Activated B cell treated with CpG ODN at 0.5 μM for 24 hours (primary cell): ENCODE measurements at regions of chr18 and their contacts with region 1.

Region 1: GRCh38 chr18:50356036-50356945 is 18.6 kb upstream of the SKA1 start:
- DNase-seq: no peak
- ATAC-seq: peak; percentile 75
- H3K4me3 Mint-ChIP-seq: peak overlapping the region; percentile 50
- H3K27ac Mint-ChIP-seq: peak overlapping the region; percentile 30
- H3K4me1 Mint-ChIP-seq: peaks cover 19% of the 10 kb centered on the region
- H3K27me3 Mint-ChIP-seq: peaks cover 6% of the 10 kb centered on the region
- CTCF ChIP-seq: no peak

Region 2: DNA sequence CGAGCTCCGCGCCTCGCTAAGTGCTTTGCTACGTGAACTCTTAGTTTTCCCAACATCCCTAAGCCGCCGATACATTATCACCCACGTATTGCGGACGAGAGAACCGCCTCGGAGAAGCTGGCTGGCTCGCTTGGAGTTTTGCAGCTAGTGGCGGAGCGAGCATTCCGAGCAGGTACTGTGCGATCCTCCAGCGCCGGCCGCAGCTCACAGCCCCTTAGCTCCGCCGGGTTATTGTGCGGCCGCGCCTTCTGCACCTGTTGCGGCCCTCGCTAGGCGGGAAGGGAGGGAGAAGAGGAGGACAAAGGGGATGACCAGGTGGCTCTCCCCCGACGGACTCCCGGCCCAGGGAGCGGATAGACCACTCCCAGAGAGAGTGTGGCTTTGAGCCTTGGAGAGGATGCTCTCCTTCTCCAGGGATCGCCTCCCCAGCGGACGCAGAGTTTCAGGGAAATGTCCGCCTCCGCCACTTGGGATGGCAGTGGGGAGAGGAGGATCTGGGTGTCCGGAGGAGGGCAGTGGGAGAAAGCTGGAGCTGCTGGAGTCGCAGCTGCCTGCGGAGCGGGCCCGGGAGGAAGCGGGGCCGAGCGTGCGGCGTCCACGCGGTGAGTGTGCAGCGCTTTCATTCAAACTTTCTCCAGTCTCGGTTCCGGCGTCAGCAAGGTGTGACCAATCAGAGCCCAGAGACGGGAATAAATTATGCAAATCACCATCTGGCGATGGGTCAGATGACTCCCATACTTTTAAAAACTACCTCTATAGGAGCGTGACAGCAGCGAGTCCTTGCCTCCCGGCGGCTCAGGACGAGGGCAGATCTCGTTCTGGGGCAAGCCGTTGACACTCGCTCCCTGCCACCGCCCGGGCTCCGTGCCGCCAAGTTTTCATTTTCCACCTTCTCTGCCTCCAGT is 794.8 kb before region 1 on chr18 and contains the start of gene LIPG:
- CTCF ChIA-PET with region 1: no interaction called
- POLR2A ChIA-PET with region 1: no interaction called
- intact Hi-C with region 1: loop called (anchors 5 kb)
- DNase-seq: peak; percentile 15
- ATAC-seq: peak; percentile 61
- H3K4me3 Mint-ChIP-seq: peak within 1 kb of the TSS; percentile 73
- H3K27ac Mint-ChIP-seq: no peak within 1 kb of the TSS
- H3K4me1 Mint-ChIP-seq: peaks cover 32% of the 10 kb centered on the region
- H3K27me3 Mint-ChIP-seq: peaks cover 73% of the 10 kb centered on the region
- CTCF ChIP-seq: no peak
- total RNA-seq, gene LIPG: 0.29 TPM in 1 of 2 replicates, not detected in the other

Region 3: GRCh38 chr18:50218432-50219197 is 137.7 kb before region 1 on chr18:
- CTCF ChIA-PET with region 1: interaction called, 149 read pairs
- POLR2A ChIA-PET with region 1: interaction called, 7 read pairs
- intact Hi-C with region 1: loop called (anchors 1 kb)
- DNase-seq: peak; percentile 16
- ATAC-seq: peak; percentile 60
- H3K4me3 Mint-ChIP-seq: no peak overlapping the region
- H3K27ac Mint-ChIP-seq: no peak overlapping the region
- H3K4me1 Mint-ChIP-seq: peaks cover 4% of the 10 kb centered on the region
- H3K27me3 Mint-ChIP-seq: peaks cover 25% of the 10 kb centered on the region
- CTCF ChIP-seq: no peak

Region 4: GRCh38 chr18:50287441-50288347 is 68.6 kb before region 1 on chr18 and contains the start of gene CXXC1:
- CTCF ChIA-PET with region 1: interaction called, 5 read pairs
- POLR2A ChIA-PET with region 1: interaction called, 20 read pairs
- intact Hi-C with region 1: loop called (anchors 1 kb)
- DNase-seq: peak; percentile 88
- ATAC-seq: peak; percentile 87
- H3K4me3 Mint-ChIP-seq: peak within 1 kb of the TSS; percentile 99
- H3K27ac Mint-ChIP-seq: peak within 1 kb of the TSS; percentile 95
- H3K4me1 Mint-ChIP-seq: peaks cover 23% of the 10 kb centered on the region
- H3K27me3 Mint-ChIP-seq: no peaks in the 10 kb centered on the region
- CTCF ChIP-seq: no peak
- total RNA-seq, gene CXXC1: 126 and 134 TPM in 2 replicates

Region 5: GRCh38 chr18:50315100-50315871 is 41.0 kb before region 1 on chr18:
- CTCF ChIA-PET with region 1: interaction called, 19 read pairs
- POLR2A ChIA-PET with region 1: no interaction called
- intact Hi-C with region 1: loop called (anchors 1 kb)
- DNase-seq: no peak
- ATAC-seq: peak; percentile 78
- H3K4me3 Mint-ChIP-seq: peak overlapping the region; percentile 42
- H3K27ac Mint-ChIP-seq: peak overlapping the region; percentile 19
- H3K4me1 Mint-ChIP-seq: peaks cover 69% of the 10 kb centered on the region
- H3K27me3 Mint-ChIP-seq: no peaks in the 10 kb centered on the region
- CTCF ChIP-seq: no peak

Region 6: DNA sequence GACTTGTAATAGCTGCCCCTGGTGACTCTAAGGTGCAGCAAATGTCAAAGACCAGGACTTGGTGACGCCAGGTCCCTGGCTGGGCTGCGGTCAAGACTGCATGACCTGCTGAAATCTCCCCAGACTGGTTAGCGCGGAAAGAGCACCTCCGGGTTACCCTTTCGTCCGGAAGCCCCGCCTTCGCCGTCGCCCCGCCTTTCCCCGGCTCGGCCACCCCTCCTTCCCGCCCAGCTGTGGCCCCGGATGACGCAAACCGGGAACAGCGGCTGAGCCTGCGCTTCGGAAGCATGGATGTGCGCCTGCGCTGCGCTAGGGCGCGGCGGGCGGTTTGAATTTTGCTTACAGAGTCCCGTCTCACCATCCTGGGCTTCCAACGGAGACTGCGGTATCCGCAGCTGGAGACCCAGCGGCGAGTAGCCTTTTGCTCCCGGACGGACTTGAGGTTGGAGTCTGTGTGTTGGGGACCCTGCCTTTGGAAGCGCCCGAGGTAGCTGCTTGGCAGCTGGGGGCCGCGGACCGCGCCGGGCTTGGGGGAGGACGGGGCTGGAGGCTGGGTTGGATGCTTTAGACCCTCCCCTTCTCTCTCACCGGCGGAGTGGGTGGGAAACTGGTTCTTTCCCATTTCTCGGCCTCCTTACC is 18.6 kb after region 1 on chr18 and contains the start of gene SKA1:
- CTCF ChIA-PET with region 1: interaction called, 6 read pairs
- POLR2A ChIA-PET with region 1: interaction called, 3 read pairs
- intact Hi-C with region 1: loop called (anchors 1 kb)
- DNase-seq: peak; percentile 85
- ATAC-seq: peak; percentile 100
- H3K4me3 Mint-ChIP-seq: peak within 1 kb of the TSS; percentile 83
- H3K27ac Mint-ChIP-seq: peak within 1 kb of the TSS; percentile 84
- H3K4me1 Mint-ChIP-seq: peaks cover 14% of the 10 kb centered on the region
- H3K27me3 Mint-ChIP-seq: peaks cover 6% of the 10 kb centered on the region
- CTCF ChIP-seq: no peak
- total RNA-seq, gene SKA1: 0.71 and 1.0 TPM in 2 replicates

Region 7: DNA sequence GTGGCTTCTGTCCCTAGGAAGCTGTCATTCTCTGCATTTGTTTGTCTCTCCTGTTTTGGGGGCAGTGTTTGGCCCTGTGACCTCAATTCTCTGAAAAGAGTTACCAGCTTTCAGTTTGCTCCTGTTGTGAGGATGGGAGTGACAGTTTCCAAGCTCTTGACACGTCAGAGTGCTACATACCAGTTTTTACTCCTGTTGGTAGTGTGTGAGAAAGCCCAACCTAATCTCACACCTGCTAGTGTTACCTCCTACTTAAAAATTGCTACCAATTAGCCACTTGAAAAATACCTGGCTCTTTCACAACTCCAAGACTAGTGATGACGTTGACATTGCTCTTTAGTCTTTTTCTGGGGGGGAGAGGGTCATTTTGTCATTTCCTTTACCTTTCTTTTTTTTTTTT is 32.7 kb after region 1 on chr18:
- CTCF ChIA-PET with region 1: no interaction called
- POLR2A ChIA-PET with region 1: no interaction called
- intact Hi-C with region 1: no loop called
- DNase-seq: no peak
- ATAC-seq: no peak
- H3K4me3 Mint-ChIP-seq: no peak overlapping the region
- H3K27ac Mint-ChIP-seq: no peak overlapping the region
- H3K4me1 Mint-ChIP-seq: no peaks in the 10 kb centered on the region
- H3K27me3 Mint-ChIP-seq: no peaks in the 10 kb centered on the region
- CTCF ChIP-seq: no peak

Region 8: GRCh38 chr18:50465201-50466153 is 109.2 kb after region 1 on chr18:
- CTCF ChIA-PET with region 1: no interaction called
- POLR2A ChIA-PET with region 1: no interaction called
- intact Hi-C with region 1: no loop called
- DNase-seq: no peak
- ATAC-seq: no peak
- H3K4me3 Mint-ChIP-seq: no peak overlapping the region
- H3K27ac Mint-ChIP-seq: no peak overlapping the region
- H3K4me1 Mint-ChIP-seq: no peaks in the 10 kb centered on the region
- H3K27me3 Mint-ChIP-seq: peaks cover 2% of the 10 kb centered on the region
- CTCF ChIP-seq: no peak